ENCODE measurements at regions of chr10 and their contacts with region 1.

Region 1: DNA sequence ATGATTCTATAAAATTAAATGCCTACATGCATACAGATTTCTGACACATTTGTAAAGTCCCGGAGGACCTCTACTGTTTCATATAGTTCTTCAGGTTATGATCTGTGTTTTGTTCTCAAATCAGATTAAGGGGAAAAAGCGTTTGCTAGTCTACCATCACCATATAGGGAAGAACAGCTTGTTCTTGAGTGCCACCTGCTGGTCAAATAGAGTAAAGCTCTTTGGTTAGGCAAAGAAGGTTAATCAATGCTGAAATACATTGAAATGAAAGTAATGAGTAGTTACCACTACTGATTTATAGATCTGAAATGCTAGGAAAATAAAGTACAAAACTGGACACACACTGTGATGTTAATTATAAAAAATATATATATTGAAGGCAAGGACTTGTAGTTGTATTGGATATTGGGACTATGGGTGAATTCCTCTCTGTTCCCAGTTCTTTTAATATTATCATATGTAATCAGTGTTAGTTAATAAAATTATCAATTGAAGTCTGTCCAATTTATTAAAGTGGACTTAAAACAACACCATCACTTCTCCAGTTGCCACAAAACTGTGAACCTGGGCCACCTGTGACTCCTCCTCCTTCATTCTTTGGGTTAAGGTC is 72.6 kb upstream of the PDLIM1 start:
- DNase-seq: peak; percentile 71
- H3K4me3 ChIP-seq: no peak overlapping the region
- H3K27ac ChIP-seq: no peak overlapping the region
- H3K4me1 ChIP-seq: peaks cover 11% of the 10 kb centered on the region
- H3K27me3 ChIP-seq: no peaks in the 10 kb centered on the region
- CTCF ChIP-seq: peak; percentile 58 to 69
- POLR2A ChIP-seq: no peak

Region 2: DNA sequence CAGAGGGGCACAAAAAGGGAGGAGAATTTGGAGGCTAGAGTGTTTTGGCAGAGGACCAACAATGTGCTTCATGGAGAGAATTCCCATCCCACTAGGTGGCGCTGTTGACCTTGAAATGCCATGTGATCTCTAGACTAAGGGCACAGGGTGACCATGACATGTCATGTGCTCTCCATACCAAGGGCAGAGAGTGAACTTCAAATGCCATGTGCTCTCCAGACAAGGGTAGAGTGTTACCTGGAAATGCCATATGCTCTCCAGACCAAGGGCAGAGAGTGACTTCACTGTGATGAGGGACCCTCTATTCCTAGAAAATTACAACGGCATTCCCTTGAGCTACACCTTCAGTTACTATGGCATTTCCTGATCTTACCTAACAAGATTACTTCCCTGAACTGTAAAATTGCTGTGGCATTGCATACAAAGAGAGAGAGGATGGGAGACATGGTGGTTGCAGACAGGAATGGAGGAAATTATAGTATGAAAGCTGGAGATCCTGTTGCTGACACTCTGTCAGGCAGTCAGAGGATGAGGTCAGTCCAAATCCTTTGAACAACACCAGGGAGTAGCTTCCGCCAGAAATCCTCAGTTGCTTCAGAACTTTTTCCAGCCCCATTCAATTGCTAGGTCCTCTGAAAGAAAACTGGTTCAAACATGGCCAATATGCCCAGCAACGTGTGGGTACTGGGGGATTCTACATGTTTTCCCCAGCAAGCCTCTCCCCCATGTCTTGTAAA is 230.2 kb before region 1 on chr10:
- CTCF ChIA-PET with region 1: interaction called, 85 read pairs
- POLR2A ChIA-PET with region 1: no interaction called
- dilution Hi-C with region 1: no loop called
- intact Hi-C with region 1: loop called (anchors 1 kb)
- DNase-seq: peak; percentile 74
- H3K4me3 ChIP-seq: no peak overlapping the region
- H3K27ac ChIP-seq: no peak overlapping the region
- H3K4me1 ChIP-seq: no peaks in the 10 kb centered on the region
- H3K27me3 ChIP-seq: no peaks in the 10 kb centered on the region
- CTCF ChIP-seq: peak; percentile 73 to 77
- POLR2A ChIP-seq: no peak

Region 3: GRCh38 chr10:95208702-95209391 is 154.6 kb before region 1 on chr10:
- CTCF ChIA-PET with region 1: interaction called, 15 read pairs
- POLR2A ChIA-PET with region 1: no interaction called
- dilution Hi-C with region 1: no loop called
- intact Hi-C with region 1: loop called (anchors 1 kb)
- DNase-seq: peak; percentile 34
- H3K4me3 ChIP-seq: no peak overlapping the region
- H3K27ac ChIP-seq: no peak overlapping the region
- H3K4me1 ChIP-seq: no peaks in the 10 kb centered on the region
- H3K27me3 ChIP-seq: no peaks in the 10 kb centered on the region
- CTCF ChIP-seq: peak; percentile 2 to 5
- POLR2A ChIP-seq: no peak

Region 4: DNA sequence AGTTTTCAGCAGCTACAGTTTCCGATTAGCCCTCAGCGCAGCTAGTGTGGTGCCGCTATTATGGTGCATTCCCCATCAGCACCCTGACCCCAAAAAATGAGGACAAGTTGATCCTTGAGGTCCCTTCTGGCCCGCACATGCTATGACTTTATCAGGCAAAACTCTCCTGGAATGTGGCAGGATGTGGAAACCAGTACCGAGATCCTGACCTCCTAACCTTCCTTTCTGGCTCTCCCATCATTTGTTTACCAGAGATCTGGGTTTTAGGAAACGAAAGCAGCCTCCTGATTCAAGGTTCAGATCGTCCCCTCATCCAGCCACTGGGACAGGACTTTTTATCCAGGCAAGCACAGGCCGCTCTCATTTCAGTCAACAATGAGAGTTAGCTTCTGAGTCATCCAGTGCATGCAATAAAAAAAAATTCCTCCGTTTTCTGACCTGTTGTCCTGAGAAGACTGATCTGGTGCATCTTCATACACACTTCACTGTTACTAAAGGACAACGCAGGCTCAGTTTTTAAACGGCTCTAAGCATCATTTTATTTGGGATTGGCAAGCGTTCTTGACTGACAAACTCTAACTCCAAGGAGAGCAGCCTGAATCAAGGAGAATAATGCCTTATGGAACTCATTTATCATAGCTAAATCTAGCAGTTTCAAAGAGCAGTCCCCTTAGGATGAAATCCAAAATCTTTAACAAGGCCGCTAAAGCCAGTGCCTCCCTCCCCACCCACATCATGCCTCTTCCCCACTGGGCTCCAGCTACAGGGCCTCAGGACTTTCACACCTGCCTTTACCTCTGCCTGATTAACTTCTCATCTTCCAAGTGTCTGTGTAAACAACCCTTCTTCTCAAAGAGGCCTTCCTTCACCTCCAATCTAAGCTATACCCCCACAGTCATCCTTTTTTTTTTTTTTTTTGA is 89.8 kb before region 1 on chr10:
- CTCF ChIA-PET with region 1: interaction called, 16 read pairs
- POLR2A ChIA-PET with region 1: no interaction called
- dilution Hi-C with region 1: no loop called
- intact Hi-C with region 1: loop called (anchors 1 kb)
- DNase-seq: peak; percentile 89
- H3K4me3 ChIP-seq: peak overlapping the region in 1 of 3 experiments; percentile 23
- H3K27ac ChIP-seq: peak overlapping the region; percentile 76
- H3K4me1 ChIP-seq: peaks cover 22% of the 10 kb centered on the region
- H3K27me3 ChIP-seq: no peaks in the 10 kb centered on the region
- CTCF ChIP-seq: no peak
- POLR2A ChIP-seq: no peak

Region 5: GRCh38 chr10:95333997-95334804 is 29.2 kb before region 1 on chr10:
- CTCF ChIA-PET with region 1: interaction called, 14 read pairs
- POLR2A ChIA-PET with region 1: no interaction called
- dilution Hi-C with region 1: no loop called
- intact Hi-C with region 1: loop called (anchors 1 kb)
- DNase-seq: peak; percentile 89
- H3K4me3 ChIP-seq: no peak overlapping the region
- H3K27ac ChIP-seq: peak overlapping the region; percentile 96
- H3K4me1 ChIP-seq: peaks cover 30% of the 10 kb centered on the region
- H3K27me3 ChIP-seq: no peaks in the 10 kb centered on the region
- CTCF ChIP-seq: no peak
- POLR2A ChIP-seq: peak; percentile 57

Region 6: GRCh38 chr10:95601116-95601719 is 237.8 kb after region 1 on chr10:
- CTCF ChIA-PET with region 1: interaction called, 23 read pairs
- POLR2A ChIA-PET with region 1: no interaction called
- dilution Hi-C with region 1: no loop called
- intact Hi-C with region 1: no loop called
- DNase-seq: peak; percentile 89
- H3K4me3 ChIP-seq: no peak overlapping the region
- H3K27ac ChIP-seq: no peak overlapping the region
- H3K4me1 ChIP-seq: no peaks in the 10 kb centered on the region
- H3K27me3 ChIP-seq: peaks cover 0 to 7% of the 10 kb centered on the region in 2 experiments
- CTCF ChIP-seq: peak; percentile 90 to 96
- POLR2A ChIP-seq: no peak

Measured in endothelial cell of umbilical vein (primary cell).